H1 (cell line): ENCODE measurements at regions of chr22 and their contacts with region 1.

Region 1: GRCh38 chr22:45082795-45083194 is 73.0 kb upstream of the PHF21B start:
- DNase-seq: peak in 1 of 2 experiments; percentile 81
- H3K4me3 ChIP-seq: no peak overlapping the region
- H3K27ac ChIP-seq: no peak overlapping the region
- H3K4me1 ChIP-seq: peaks cover 0 to 6% (median 2%) of the 10 kb centered on the region in 4 experiments; a peak in 2 of 7 replicates
- H3K27me3 ChIP-seq: peaks cover 0 to 3% (median 0%) of the 10 kb centered on the region in 4 experiments; a peak in 1 of 7 replicates
- CTCF ChIP-seq: peak; percentile 76 to 92 (median 80)
- EP300 ChIP-seq: no peak
- POLR2A ChIP-seq: no peak
- RAD21 ChIP-seq: peak; percentile 89 to 94

Region 2: GRCh38 chr22:44995105-44995514 is 87.7 kb before region 1 on chr22:
- CTCF ChIA-PET with region 1: interaction called, 10 read pairs
- POLR2A ChIA-PET with region 1: interaction called, 6 read pairs
- DNase-seq: no peak
- H3K4me3 ChIP-seq: no peak overlapping the region
- H3K27ac ChIP-seq: no peak overlapping the region
- H3K4me1 ChIP-seq: peaks cover 0 to 21% (median 6%) of the 10 kb centered on the region in 4 experiments; a peak in 6 of 7 replicates
- H3K27me3 ChIP-seq: no peaks in the 10 kb centered on the region
- CTCF ChIP-seq: no peak
- EP300 ChIP-seq: no peak
- POLR2A ChIP-seq: no peak
- RAD21 ChIP-seq: no peak

Region 3: DNA sequence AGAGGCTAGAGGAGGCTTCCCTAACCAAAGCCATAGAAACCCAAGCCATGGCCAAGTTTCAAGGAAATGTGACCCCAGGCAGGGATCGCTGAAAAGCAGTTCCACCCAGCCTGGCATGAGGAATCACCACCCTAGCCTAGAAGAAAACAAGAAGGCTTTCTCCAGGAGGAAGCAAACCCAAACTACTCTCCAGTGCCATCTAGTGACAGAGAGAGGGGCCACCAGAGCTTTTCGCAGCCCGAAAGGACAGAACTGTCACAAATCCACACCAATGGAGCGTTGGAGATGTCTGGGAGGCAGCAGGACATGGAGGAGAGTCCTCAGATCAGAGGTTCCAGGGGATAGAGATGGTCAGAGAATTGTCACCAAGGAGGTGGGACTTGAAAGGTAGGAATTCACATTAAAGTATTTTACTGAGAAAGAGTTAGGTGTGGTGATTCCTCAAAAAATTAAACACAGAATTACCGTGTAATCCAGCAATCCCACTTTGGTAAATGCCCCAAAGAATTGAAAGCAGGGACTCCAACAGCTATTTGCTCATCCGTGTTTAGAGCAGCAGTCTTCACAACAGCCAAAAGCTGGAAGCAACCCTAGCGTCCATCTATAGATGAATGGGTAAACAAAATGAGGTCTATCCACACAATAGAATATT is 13.6 kb after region 1 on chr22:
- CTCF ChIA-PET with region 1: interaction called, 33 read pairs
- POLR2A ChIA-PET with region 1: interaction called, 4 read pairs
- DNase-seq: peak in 1 of 2 experiments; percentile 81
- H3K4me3 ChIP-seq: no peak overlapping the region
- H3K27ac ChIP-seq: no peak overlapping the region
- H3K4me1 ChIP-seq: peaks cover 0 to 4% (median 0%) of the 10 kb centered on the region in 4 experiments; a peak in 2 of 7 replicates
- H3K27me3 ChIP-seq: no peaks in the 10 kb centered on the region
- CTCF ChIP-seq: peak; percentile 64 to 91 (median 86)
- EP300 ChIP-seq: no peak
- POLR2A ChIP-seq: no peak
- RAD21 ChIP-seq: peak; percentile 81 to 86

Region 4: DNA sequence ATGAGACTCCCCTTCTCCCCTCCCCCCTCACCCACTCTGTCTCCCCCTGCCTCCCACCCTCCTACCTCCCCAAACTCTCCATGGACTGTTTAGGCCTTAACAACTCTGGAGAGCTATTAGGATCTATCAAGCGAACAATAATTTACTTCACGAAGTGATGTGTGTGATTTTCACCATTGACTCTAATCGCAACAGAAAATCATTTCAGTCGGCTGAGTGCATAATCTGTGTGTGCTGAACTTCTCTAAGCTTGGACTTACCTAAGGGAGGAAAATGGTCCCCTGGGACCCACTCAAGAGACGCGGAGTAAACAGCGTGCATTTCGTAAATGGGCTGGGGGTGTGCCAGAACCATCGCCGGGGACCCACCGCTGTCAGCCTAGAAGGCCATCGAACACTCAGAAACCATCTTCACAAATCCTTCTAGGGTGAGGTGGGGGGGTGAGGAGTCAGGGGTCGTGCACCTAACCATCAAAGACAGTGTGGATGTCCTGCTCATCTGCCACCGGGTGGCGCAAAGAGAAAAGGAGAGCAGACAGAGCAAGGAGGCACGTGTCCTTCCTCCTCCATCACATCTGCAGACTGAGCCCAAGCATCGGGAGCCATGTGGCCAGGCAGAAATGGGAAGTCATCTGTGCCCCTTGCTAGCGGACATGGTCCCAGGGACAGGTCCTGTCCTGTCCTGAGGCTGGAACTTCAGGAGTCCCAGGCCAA is 18.9 kb after region 1 on chr22:
- CTCF ChIA-PET with region 1: interaction called, 33 read pairs
- POLR2A ChIA-PET with region 1: no interaction called
- DNase-seq: no peak
- H3K4me3 ChIP-seq: no peak overlapping the region
- H3K27ac ChIP-seq: no peak overlapping the region
- H3K4me1 ChIP-seq: no peaks in the 10 kb centered on the region
- H3K27me3 ChIP-seq: peaks cover 0 to 1% (median 0%) of the 10 kb centered on the region in 4 experiments; a peak in 1 of 7 replicates
- CTCF ChIP-seq: peak; percentile 56 to 82 (median 77)
- EP300 ChIP-seq: no peak
- POLR2A ChIP-seq: no peak
- RAD21 ChIP-seq: peak; percentile 81 to 82

Region 5: GRCh38 chr22:45149671-45150070 is 66.9 kb after region 1 on chr22:
- CTCF ChIA-PET with region 1: no interaction called
- POLR2A ChIA-PET with region 1: no interaction called
- DNase-seq: no peak
- H3K4me3 ChIP-seq: no peak overlapping the region
- H3K27ac ChIP-seq: no peak overlapping the region
- H3K4me1 ChIP-seq: no peaks in the 10 kb centered on the region
- H3K27me3 ChIP-seq: no peaks in the 10 kb centered on the region
- CTCF ChIP-seq: no peak
- EP300 ChIP-seq: no peak
- POLR2A ChIP-seq: no peak
- RAD21 ChIP-seq: no peak